ENCODE measurements at regions of chr10 and their contacts with region 1.

Region 1: GRCh38 chr10:90871766-90872647 is at the start of gene RPP30:
- DNase-seq: peak; percentile 80

Region 2: DNA sequence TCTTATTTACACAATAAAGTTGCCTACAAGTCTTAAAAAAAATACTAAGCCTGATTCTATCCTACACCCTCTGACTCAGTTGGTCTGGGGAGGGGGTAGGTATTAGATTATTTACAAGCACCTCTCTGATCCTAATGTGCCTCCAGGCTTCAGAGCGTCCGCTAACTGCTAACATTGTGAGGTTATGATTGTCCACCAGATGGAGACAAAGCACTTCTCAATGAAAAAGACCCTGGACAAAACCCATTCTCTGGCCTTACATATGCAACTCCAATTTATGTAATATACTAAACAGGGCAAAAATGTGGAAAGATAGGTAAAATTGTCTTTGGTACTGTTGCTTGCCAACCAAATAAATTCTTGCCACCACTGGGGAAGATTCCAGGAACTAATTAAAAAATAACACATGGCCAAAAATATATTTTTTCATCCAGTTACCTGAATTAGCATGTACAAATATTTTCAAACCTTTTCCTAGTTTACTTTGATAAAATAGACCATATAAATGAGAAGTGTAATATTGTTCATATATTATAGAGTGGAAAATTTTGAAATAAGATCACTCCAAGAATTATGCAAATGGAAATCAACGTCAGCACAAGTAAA is 1078.3 kb before region 1 on chr10:
- in situ Hi-C with region 1: loop called (anchors 25 kb)
- DNase-seq: peak; percentile 76

Region 3: GRCh38 chr10:90328896-90329295 is 543.1 kb before region 1 on chr10:
- in situ Hi-C with region 1: no loop called
- DNase-seq: no peak